ENCODE measurements at regions of chr1 and their contacts with region 1.

Region 1: DNA sequence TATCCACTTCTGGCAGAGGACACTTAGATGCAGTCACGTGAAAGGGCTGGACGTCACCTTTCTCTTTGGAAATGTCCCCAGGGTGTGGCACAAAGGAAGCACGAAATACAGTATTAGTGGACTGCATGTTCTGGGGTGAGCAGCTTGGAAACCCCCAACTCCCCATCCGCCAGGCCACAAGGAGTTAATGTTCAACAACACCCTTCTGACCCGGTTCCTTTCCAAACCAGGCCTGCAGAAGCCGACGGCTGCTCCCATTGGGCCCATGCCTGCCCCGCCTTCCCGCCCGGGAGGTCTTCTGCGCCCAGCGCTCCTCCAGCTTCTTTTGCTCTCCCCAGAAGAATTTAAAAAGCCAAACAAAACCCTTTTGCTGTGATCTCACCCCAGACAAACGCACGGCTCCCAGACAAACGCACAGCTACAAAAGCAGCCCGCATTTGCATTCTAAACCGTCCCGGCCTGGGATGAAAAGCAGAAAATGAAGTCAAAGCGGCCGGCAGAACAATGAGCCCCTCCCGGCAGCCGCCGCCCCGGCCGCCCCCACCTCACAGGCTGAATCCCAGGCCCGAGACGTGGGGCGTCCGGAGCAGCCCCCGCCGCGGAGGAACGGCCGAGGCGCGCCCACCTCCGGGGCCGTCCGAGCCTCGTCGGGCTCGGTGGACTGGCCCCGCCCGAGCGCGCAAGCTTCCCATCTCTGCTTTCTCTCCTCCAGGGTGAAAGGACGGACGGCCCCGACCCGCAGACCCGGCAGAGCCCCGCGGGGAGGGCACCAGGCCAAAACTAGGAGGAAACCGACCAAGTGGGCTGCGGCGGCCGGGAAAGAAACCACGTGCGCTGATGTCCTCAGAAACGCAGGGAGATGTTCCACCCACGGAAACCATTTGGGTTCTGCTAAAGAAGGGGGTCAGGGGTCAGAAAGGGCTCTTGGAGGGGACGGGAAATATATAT is 101.9 kb downstream of the PLPP3 start:
- DNase-seq: peak; percentile 85
- ATAC-seq: peak; percentile 90
- H3K4me3 ChIP-seq: peak overlapping the region; percentile 64 to 77 (median 68)
- H3K27ac ChIP-seq: peak overlapping the region; percentile 95
- H3K4me1 ChIP-seq: peaks cover 82% of the 10 kb centered on the region
- H3K27me3 ChIP-seq: no peaks in the 10 kb centered on the region
- CTCF ChIP-seq: no peak
- EP300 ChIP-seq: peak in 1 of 2 experiments; percentile 54; a peak in 2 of 4 replicates
- POLR2A ChIP-seq: peak; percentile 44 to 73; a peak in 2 of 4 replicates
- RAD21 ChIP-seq: no peak; the same call in none of the 2 replicates

Region 2: GRCh38 chr1:56189946-56190792 is 287.3 kb before region 1 on chr1:
- CTCF ChIA-PET with region 1: no interaction called
- POLR2A ChIA-PET with region 1: interaction called, 10 read pairs
- in situ Hi-C with region 1: no loop called
- intact Hi-C with region 1: no loop called
- DNase-seq: peak; percentile 99
- ATAC-seq: peak; percentile 94
- H3K4me3 ChIP-seq: peak overlapping the region; percentile 52 to 65 (median 58); a peak in 5 of 6 replicates
- H3K27ac ChIP-seq: peak overlapping the region; percentile 91
- H3K4me1 ChIP-seq: peaks cover 47% of the 10 kb centered on the region
- H3K27me3 ChIP-seq: no peaks in the 10 kb centered on the region
- CTCF ChIP-seq: peak; percentile 86
- EP300 ChIP-seq: peak; percentile 98 to 99
- POLR2A ChIP-seq: peak in 1 of 2 experiments; percentile 94; a peak in 2 of 4 replicates
- RAD21 ChIP-seq: peak; percentile 71

Region 3: GRCh38 chr1:56435434-56436262 is 41.8 kb before region 1 on chr1:
- CTCF ChIA-PET with region 1: no interaction called
- POLR2A ChIA-PET with region 1: interaction called, 18 read pairs
- in situ Hi-C with region 1: no loop called
- intact Hi-C with region 1: no loop called
- DNase-seq: peak; percentile 52
- ATAC-seq: peak; percentile 24
- H3K4me3 ChIP-seq: no peak overlapping the region
- H3K27ac ChIP-seq: peak overlapping the region; percentile 81
- H3K4me1 ChIP-seq: peaks cover 97% of the 10 kb centered on the region
- H3K27me3 ChIP-seq: no peaks in the 10 kb centered on the region
- CTCF ChIP-seq: no peak
- EP300 ChIP-seq: no peak
- POLR2A ChIP-seq: no peak
- RAD21 ChIP-seq: no peak

Region 4: GRCh38 chr1:56446531-56447098 is 30.8 kb before region 1 on chr1:
- CTCF ChIA-PET with region 1: no interaction called
- POLR2A ChIA-PET with region 1: interaction called, 17 read pairs
- in situ Hi-C with region 1: no loop called
- intact Hi-C with region 1: no loop called
- DNase-seq: no peak
- ATAC-seq: no peak
- H3K4me3 ChIP-seq: no peak overlapping the region
- H3K27ac ChIP-seq: peak overlapping the region; percentile 7
- H3K4me1 ChIP-seq: peaks cover 88% of the 10 kb centered on the region
- H3K27me3 ChIP-seq: no peaks in the 10 kb centered on the region
- CTCF ChIP-seq: no peak
- EP300 ChIP-seq: no peak
- POLR2A ChIP-seq: no peak
- RAD21 ChIP-seq: no peak

Region 5: DNA sequence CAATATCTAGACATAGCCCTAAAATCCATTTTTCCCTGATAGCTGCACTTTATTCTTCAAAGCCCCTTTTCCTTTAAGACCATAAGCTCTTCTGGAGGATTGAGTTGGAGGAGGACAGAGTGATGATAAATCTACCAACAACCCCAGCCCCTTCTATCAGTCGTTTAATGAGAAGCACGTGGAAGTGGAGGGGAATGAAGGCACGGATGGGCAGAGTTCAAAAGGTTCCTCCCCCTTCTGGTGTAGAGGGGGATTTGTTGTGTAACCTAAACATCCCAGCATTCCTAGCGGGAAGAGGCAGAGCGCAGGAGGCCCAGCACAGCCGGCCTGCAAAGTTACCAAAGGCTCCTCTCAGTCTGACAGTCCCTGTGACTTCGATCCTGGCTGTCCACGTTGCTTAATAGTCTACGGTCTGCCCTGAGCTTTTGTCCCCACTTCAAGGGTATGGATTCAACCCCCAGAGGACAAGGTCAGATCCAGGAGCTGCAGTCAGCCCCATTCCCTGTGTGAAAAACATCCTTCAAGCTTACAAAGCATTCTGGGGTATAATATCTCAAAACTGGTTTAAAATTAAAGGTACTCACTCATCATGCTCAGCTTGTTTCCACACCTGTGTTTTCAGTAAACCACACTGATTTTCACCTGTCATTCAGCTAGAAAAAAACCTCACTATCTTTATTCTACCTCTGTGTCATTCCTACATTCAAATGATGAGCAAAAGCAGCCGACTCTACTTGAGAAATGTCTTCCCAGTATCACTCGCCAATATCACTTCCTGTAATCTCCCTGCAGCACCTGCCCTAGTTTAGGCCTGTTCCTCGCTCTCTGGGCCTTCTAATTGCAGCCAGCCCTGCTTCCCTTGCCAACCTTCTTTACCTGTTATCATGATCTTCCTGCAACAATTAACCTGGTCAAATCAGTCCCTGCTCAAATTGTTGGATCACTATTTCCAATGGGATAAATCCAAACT is 16.0 kb before region 1 on chr1:
- CTCF ChIA-PET with region 1: no interaction called
- POLR2A ChIA-PET with region 1: interaction called, 13 read pairs
- in situ Hi-C with region 1: no loop called
- intact Hi-C with region 1: no loop called
- DNase-seq: peak; percentile 95
- ATAC-seq: peak; percentile 99
- H3K4me3 ChIP-seq: peak overlapping the region in 1 of 3 experiments; percentile 3; a peak in 1 of 6 replicates
- H3K27ac ChIP-seq: peak overlapping the region; percentile 80
- H3K4me1 ChIP-seq: peaks cover 47% of the 10 kb centered on the region
- H3K27me3 ChIP-seq: no peaks in the 10 kb centered on the region
- CTCF ChIP-seq: peak; percentile 59
- EP300 ChIP-seq: peak; percentile 60 to 94; a peak in 3 of 4 replicates
- POLR2A ChIP-seq: peak in 1 of 2 experiments; percentile 62; a peak in 2 of 4 replicates
- RAD21 ChIP-seq: peak; percentile 57

Region 6: GRCh38 chr1:56570924-56571372 is 93.5 kb after region 1 on chr1:
- CTCF ChIA-PET with region 1: no interaction called
- POLR2A ChIA-PET with region 1: interaction called, 22 read pairs
- in situ Hi-C with region 1: no loop called
- intact Hi-C with region 1: no loop called
- DNase-seq: no peak
- ATAC-seq: no peak
- H3K4me3 ChIP-seq: no peak overlapping the region
- H3K27ac ChIP-seq: peak overlapping the region; percentile 15
- H3K4me1 ChIP-seq: peaks cover 98% of the 10 kb centered on the region
- H3K27me3 ChIP-seq: no peaks in the 10 kb centered on the region
- CTCF ChIP-seq: no peak
- EP300 ChIP-seq: no peak
- POLR2A ChIP-seq: no peak
- RAD21 ChIP-seq: no peak